Dendritic cell treated with granulocyte-macrophage colony-stimulating factor and Interleukin-4, amounts not matched to agents 40 ng/mL and 50 ng/mL, for 4 days (primary cell): ENCODE measurements at regions of chr12 and their contacts with region 1.

Region 1: GRCh38 chr12:68559984-68560850 is 50.5 kb upstream of the RAP1B start:
- H3K4me3 Mint-ChIP-seq: peak overlapping the region; percentile 53
- H3K27ac Mint-ChIP-seq: peak overlapping the region; percentile 96
- H3K4me1 Mint-ChIP-seq: peaks cover 34% of the 10 kb centered on the region
- H3K27me3 Mint-ChIP-seq: no peaks in the 10 kb centered on the region

Region 2: GRCh38 chr12:68532204-68532886 is 27.9 kb before region 1 on chr12:
- intact Hi-C with region 1: loop called (anchors 1 kb)
- H3K4me3 Mint-ChIP-seq: no peak overlapping the region
- H3K27ac Mint-ChIP-seq: peak overlapping the region; percentile 72
- H3K4me1 Mint-ChIP-seq: peaks cover 21% of the 10 kb centered on the region
- H3K27me3 Mint-ChIP-seq: no peaks in the 10 kb centered on the region

Region 3: DNA sequence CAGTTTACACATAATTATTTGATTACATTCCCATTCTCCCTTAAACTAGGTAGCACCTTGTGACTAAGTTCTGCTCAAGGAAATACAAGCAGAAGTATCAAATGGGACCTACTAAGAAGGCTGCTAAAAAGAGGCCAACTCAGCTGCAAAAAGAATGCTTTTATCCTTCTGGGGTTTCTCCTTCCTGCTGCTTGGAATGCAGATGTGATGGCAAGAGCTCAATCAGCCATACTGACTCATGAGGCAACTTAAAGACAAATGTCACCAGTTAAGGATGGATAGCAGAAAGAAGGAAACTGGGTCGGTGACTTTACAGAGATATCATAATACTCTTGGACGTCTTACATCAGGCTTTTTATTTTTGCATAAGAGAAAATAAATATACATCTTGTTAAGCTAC is 12.4 kb after region 1 on chr12:
- intact Hi-C with region 1: no loop called
- H3K4me3 Mint-ChIP-seq: no peak overlapping the region
- H3K27ac Mint-ChIP-seq: no peak overlapping the region
- H3K4me1 Mint-ChIP-seq: no peaks in the 10 kb centered on the region
- H3K27me3 Mint-ChIP-seq: no peaks in the 10 kb centered on the region

Region 4: DNA sequence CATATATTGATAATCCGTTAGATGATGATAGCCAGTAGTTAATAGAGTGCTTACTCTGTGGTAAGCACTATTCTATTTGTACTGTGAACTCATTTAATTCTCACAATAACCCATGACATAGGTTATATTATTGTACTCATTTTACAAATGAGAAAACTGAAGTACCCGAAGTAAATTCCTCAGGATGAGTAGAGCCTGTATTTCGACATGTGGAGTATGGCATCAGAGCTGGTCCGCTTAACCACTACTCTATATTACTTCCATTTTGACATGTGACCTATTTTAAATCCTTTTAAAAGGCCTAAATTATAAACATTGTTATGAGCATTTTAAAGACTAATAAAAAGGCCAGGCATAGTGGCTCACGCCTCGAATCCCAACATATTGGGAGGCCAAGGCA is 42.5 kb after region 1 on chr12:
- intact Hi-C with region 1: loop called (anchors 2 kb)
- H3K4me3 Mint-ChIP-seq: no peak overlapping the region
- H3K27ac Mint-ChIP-seq: no peak overlapping the region
- H3K4me1 Mint-ChIP-seq: peaks cover 10% of the 10 kb centered on the region
- H3K27me3 Mint-ChIP-seq: no peaks in the 10 kb centered on the region

Region 5: GRCh38 chr12:68617160-68617926 is 57.1 kb after region 1 on chr12:
- intact Hi-C with region 1: no loop called
- H3K4me3 Mint-ChIP-seq: no peak overlapping the region
- H3K27ac Mint-ChIP-seq: peak overlapping the region; percentile 34
- H3K4me1 Mint-ChIP-seq: peaks cover 66% of the 10 kb centered on the region
- H3K27me3 Mint-ChIP-seq: no peaks in the 10 kb centered on the region